ENCODE measurements at regions of chr17 and their contacts with region 1.

Region 1: GRCh38 chr17:15502369-15503112 is 35.1 kb upstream of the CDRT4 start:
- DNase-seq: peak; percentile 68
- ATAC-seq: no peak
- H3K4me3 Mint-ChIP-seq: no peak overlapping the region
- H3K27ac Mint-ChIP-seq: no peak overlapping the region
- H3K4me1 Mint-ChIP-seq: peaks cover 4% of the 10 kb centered on the region
- H3K27me3 Mint-ChIP-seq: no peaks in the 10 kb centered on the region

Region 2: GRCh38 chr17:15257258-15257788 is 245.2 kb before region 1 on chr17:
- CTCF ChIA-PET with region 1: interaction called, 29 read pairs
- DNase-seq: peak; percentile 75
- ATAC-seq: peak; percentile 54
- H3K4me3 Mint-ChIP-seq: no peak overlapping the region
- H3K27ac Mint-ChIP-seq: no peak overlapping the region
- H3K4me1 Mint-ChIP-seq: peaks cover 16% of the 10 kb centered on the region
- H3K27me3 Mint-ChIP-seq: peaks cover 69% of the 10 kb centered on the region

Region 3: GRCh38 chr17:15490634-15491261 is 11.8 kb before region 1 on chr17:
- CTCF ChIA-PET with region 1: interaction called, 11 read pairs
- DNase-seq: no peak
- ATAC-seq: no peak
- H3K4me3 Mint-ChIP-seq: no peak overlapping the region
- H3K27ac Mint-ChIP-seq: no peak overlapping the region
- H3K4me1 Mint-ChIP-seq: no peaks in the 10 kb centered on the region
- H3K27me3 Mint-ChIP-seq: no peaks in the 10 kb centered on the region

Region 4: DNA sequence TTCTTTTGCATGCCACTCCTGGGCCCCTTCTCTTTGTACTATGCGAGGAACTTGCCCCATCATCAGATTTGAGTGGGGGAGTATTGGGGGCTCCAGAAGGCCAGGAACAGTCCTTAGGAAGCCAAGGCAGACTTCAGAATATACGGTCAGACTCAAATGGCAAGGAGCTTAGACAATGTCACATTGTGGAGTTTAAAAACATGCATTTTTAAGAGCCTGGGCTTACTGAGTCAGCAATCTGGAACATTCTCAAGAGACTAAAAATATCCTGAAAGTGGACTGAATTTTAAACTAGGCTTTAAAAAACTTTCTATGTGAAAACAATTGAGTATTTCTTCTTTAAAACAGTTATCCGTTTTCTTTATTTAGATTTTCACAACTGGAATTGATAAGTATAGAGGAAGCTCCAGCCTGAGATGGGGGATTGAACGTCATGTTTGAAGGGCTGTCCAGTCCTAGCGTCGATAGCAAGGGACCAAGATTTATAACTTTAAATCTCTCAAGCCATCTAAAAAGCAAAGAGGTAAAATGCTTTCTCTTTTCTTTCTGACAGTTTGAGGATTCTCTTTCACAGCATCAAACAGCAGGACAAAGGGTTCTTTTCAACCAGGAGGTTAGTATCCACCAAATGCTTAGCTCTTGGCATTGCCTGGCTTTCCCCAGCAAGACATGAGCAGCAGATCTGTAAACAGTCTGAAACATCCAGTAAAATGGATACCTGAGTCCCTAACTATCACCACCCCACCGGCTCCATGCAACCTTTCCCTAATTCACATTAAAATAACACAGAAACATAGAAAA is 10.7 kb after region 1 on chr17:
- CTCF ChIA-PET with region 1: interaction called, 10 read pairs
- DNase-seq: no peak
- ATAC-seq: no peak
- H3K4me3 Mint-ChIP-seq: no peak overlapping the region
- H3K27ac Mint-ChIP-seq: no peak overlapping the region
- H3K4me1 Mint-ChIP-seq: no peaks in the 10 kb centered on the region
- H3K27me3 Mint-ChIP-seq: no peaks in the 10 kb centered on the region

Measured in activated CD8-positive, alpha-beta memory T cell treated with anti-CD3 and anti-CD28 coated beads, Interleukin-2, amount 10 ng/mL, durations not matched to agents 7 days and 5 days (primary cell).